A673 (cell line): ENCODE measurements at regions of chr11 and their contacts with region 1.

Region 1: GRCh38 chr11:47932544-47932943 is 47.8 kb upstream of the PTPRJ start:
- DNase-seq: no peak
- H3K4me3 ChIP-seq: no peak overlapping the region
- H3K27ac ChIP-seq: no peak overlapping the region
- H3K4me1 ChIP-seq: no peaks in the 10 kb centered on the region
- H3K27me3 ChIP-seq: no peaks in the 10 kb centered on the region
- CTCF ChIP-seq: no peak

Region 2: GRCh38 chr11:47442514-47442913 is 490.0 kb before region 1 on chr11:
- CTCF ChIA-PET with region 1: no interaction called
- POLR2A ChIA-PET with region 1: no interaction called
- intact Hi-C with region 1: no loop called
- DNase-seq: no peak
- H3K4me3 ChIP-seq: no peak overlapping the region
- H3K27ac ChIP-seq: no peak overlapping the region
- H3K4me1 ChIP-seq: no peaks in the 10 kb centered on the region
- H3K27me3 ChIP-seq: no peaks in the 10 kb centered on the region
- CTCF ChIP-seq: no peak

Region 3: DNA sequence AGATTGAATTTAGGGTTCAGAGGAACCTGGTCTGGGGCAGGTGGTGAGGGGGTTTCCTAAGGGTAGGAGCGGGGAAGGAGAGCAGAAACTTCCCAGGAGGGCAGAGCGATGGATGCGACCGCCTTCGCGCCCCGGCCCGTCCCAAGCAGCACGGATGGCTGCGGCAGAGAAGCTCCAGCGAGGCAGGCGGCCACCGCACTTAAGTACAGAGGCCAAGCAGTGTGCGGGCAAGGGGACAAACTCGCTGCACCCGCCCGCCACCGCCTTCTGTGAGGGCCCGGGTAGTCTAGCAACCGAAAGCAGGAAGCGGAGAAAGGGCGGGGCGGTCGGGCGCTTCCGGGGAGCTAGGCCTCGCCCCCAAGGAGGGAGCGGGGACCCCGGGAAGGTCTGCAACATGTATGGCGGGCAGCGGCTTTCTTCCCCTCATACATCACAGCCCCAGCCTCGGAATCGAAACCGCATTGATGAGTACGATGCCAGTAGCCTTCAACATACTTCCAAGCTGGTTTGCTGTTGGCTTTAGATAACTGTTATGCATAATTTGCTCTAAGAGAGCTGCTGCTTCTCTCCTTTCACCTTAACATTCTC is 217.4 kb before region 1 on chr11 and contains the start of gene AGBL2:
- CTCF ChIA-PET with region 1: no interaction called
- POLR2A ChIA-PET with region 1: interaction called, 15 read pairs
- intact Hi-C with region 1: no loop called
- DNase-seq: peak; percentile 94
- H3K4me3 ChIP-seq: peak within 1 kb of the TSS; percentile 61
- H3K27ac ChIP-seq: peak within 1 kb of the TSS; percentile 63
- H3K4me1 ChIP-seq: peaks cover 12% of the 10 kb centered on the region
- H3K27me3 ChIP-seq: no peaks in the 10 kb centered on the region
- CTCF ChIP-seq: no peak
- total RNA-seq, gene AGBL2: 6.5 and 8.2 TPM in 2 replicates

Region 4: GRCh38 chr11:48109046-48109666 is 176.6 kb after region 1 on chr11:
- CTCF ChIA-PET with region 1: interaction called, 44 read pairs
- POLR2A ChIA-PET with region 1: no interaction called
- intact Hi-C with region 1: loop called (anchors 1 kb)
- DNase-seq: peak; percentile 94
- H3K4me3 ChIP-seq: peak overlapping the region; percentile 35
- H3K27ac ChIP-seq: peak overlapping the region; percentile 62
- H3K4me1 ChIP-seq: peaks cover 10% of the 10 kb centered on the region
- H3K27me3 ChIP-seq: no peaks in the 10 kb centered on the region
- CTCF ChIP-seq: peak; percentile 67

Region 5: GRCh38 chr11:48207881-48208280 is 275.3 kb after region 1 on chr11:
- CTCF ChIA-PET with region 1: no interaction called
- POLR2A ChIA-PET with region 1: no interaction called
- intact Hi-C with region 1: no loop called
- DNase-seq: no peak
- H3K4me3 ChIP-seq: no peak overlapping the region
- H3K27ac ChIP-seq: no peak overlapping the region
- H3K4me1 ChIP-seq: no peaks in the 10 kb centered on the region
- H3K27me3 ChIP-seq: peaks cover 28% of the 10 kb centered on the region
- CTCF ChIP-seq: no peak

Region 6: DNA sequence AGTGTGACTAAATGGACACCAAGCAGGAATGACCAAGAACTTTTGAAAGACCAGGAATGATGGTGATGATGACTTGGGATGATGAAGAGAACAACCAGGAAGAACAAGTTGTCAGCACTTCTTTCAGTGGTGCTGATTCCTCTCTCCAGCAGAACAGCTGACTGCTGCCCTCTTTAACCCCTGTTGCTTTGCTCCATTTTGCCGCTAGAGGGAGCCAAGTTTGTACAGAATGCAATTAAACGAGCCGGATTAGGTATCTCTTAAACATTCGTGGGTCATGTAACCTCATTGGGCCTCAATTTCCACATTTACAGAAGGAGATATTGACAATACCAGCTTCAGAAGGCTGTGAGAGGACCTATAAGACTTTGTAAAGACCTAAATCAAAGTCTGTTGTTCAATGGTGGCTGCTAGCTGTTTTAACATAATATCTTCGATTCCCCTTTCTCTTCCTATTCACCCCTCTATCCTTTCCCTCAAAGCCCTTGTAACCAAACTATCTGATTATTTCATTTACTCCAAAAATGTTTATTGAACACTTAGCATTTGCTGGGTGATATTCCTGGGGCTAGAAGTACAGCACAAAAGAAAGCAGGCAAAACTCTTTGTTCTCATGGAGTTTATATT is 375.3 kb after region 1 on chr11:
- CTCF ChIA-PET with region 1: no interaction called
- POLR2A ChIA-PET with region 1: no interaction called
- intact Hi-C with region 1: loop called (anchors 5 kb)
- DNase-seq: peak; percentile 91
- H3K4me3 ChIP-seq: no peak overlapping the region
- H3K27ac ChIP-seq: no peak overlapping the region
- H3K4me1 ChIP-seq: no peaks in the 10 kb centered on the region
- H3K27me3 ChIP-seq: no peaks in the 10 kb centered on the region
- CTCF ChIP-seq: peak; percentile 100